Stomach (tissue), 19 donors: ENCODE measurements at regions of chr12 and their contacts with region 1.

Region 1: DNA sequence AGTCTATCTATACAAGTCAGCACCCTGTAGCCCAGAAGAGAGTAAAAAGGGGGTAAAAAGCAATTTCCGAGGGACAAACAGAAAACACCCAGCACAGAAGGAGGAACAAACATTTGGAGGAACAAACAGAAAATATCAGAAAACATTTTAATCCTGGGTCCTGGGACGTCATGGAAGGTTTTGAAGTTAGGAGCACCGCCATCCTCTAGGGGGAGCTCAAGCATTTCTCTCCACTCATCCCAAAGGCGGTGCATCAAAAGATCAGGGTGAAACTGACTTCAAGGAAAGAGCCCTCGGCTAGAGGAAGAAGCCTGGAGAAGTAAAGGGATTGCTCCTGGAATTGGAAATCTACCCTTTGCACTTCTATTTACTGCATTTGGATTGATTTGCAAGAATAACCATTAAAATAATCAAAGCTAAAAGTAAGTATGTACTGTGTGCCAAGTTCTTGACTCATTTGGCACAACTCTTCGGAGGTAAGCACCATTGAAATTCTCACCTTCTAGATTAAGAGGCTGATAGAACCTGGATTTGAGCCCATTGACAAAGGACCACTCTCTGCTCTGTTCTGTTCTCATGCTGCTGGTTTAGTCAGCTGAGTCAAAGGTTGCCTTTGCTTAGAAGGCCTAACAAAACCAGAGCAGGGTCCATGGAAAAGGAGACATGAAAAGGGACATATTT is 17.2 kb upstream of the POC1B start:
- DNase-seq: peak; percentile 76 to 94
- H3K4me3 ChIP-seq: no peak overlapping the region
- H3K27ac ChIP-seq: no peak overlapping the region
- H3K4me1 ChIP-seq: peaks cover 10 to 27% (median 14%) of the 10 kb centered on the region in 4 donors
- H3K27me3 ChIP-seq: no peaks in the 10 kb centered on the region
- CTCF ChIP-seq: peak in 5 of 7 experiments; percentile 70 to 82 (median 78)
- EP300 ChIP-seq: no peak
- POLR2A ChIP-seq: no peak

Region 2: GRCh38 chr12:88960213-88960878 is 582.7 kb before region 1 on chr12:
- intact Hi-C with region 1: no loop called
- DNase-seq: peak in 1 of 2 donors; percentile 22
- H3K4me3 ChIP-seq: no peak overlapping the region
- H3K27ac ChIP-seq: no peak overlapping the region
- H3K4me1 ChIP-seq: peaks cover 0 to 12% (median 2%) of the 10 kb centered on the region in 4 donors
- H3K27me3 ChIP-seq: no peaks in the 10 kb centered on the region
- CTCF ChIP-seq: no peak
- EP300 ChIP-seq: no peak
- POLR2A ChIP-seq: no peak

Region 3: DNA sequence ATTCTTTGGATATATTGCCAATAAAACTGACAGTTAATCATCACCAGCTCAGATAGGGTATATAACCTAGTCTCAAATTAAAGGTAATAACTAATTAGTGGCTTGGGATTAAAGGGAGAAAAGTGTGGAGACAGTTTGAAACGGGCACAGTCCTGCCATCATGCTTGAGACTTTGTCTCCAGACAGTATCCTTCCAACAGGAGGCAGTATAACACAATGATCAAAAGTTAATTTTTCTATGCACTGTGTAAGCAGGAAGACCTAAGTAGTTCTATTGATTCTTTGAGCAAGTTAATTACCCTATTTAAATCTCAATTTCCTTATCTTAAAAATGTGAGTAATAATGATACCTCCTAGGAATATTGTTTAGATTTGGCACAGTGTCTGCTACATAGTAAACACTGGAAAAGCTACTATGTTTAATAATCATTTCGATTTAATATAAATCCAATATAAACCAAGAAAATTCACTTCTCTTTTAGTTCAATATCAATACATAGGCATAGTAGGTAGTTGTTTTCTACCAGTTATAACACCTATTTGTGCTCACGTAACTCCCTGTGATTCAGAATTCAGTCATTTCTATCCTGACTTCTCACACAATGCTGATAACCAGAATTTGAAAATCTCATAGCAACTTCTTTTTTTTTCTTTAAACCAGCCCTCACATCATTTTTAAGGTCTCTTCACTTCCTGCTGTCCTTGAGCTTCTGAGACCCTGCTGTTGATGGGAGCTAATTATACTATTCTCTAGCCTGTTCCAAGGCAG is 72.1 kb before region 1 on chr12:
- intact Hi-C with region 1: no loop called
- DNase-seq: peak in 1 of 2 donors; percentile 82
- H3K4me3 ChIP-seq: no peak overlapping the region
- H3K27ac ChIP-seq: peak overlapping the region in 1 of 5 donors; percentile 42
- H3K4me1 ChIP-seq: peaks cover 0 to 11% (median 2%) of the 10 kb centered on the region in 4 donors
- H3K27me3 ChIP-seq: no peaks in the 10 kb centered on the region
- CTCF ChIP-seq: peak in 5 of 7 experiments; percentile 39 to 70 (median 55)
- EP300 ChIP-seq: no peak
- POLR2A ChIP-seq: no peak

Region 4: DNA sequence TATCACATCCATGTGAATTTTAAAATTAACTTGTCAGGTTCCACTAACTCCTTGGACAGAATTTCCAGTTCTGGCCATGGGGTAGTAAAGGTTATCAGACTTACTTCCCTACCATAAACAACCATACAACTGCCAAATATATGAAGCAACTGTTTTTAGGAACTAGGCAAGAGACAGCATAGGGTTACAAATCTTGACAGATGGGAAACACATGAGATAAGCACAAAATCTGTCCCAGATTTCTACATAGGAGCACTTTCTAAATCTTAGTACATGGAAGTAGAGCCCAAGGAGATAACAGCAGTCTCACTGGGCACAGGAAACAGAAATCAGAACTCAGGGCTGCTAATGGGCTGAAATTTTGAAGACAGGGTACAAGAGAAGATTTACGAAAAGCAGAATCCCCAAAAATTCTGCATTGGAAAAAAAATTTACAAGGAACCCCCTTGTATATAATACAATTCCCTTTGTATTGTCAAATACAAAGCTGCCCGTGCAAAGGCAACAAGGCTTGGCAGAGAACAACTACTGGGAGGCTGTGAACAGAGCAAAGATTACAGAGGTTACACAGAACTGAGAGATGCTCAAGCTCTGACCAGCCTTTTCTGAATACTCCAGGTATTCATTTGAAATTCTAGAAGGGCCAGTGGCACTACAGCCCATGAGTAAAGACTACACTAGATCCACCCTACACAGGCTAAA is 61.7 kb before region 1 on chr12:
- intact Hi-C with region 1: no loop called
- DNase-seq: no peak
- H3K4me3 ChIP-seq: no peak overlapping the region
- H3K27ac ChIP-seq: no peak overlapping the region
- H3K4me1 ChIP-seq: peaks cover 0 to 12% (median 3%) of the 10 kb centered on the region in 4 donors
- H3K27me3 ChIP-seq: no peaks in the 10 kb centered on the region
- CTCF ChIP-seq: no peak
- EP300 ChIP-seq: no peak
- POLR2A ChIP-seq: no peak

Region 5: GRCh38 chr12:89663577-89664357 is 120.7 kb after region 1 on chr12:
- intact Hi-C with region 1: no loop called
- DNase-seq: peak in 1 of 2 donors; percentile 13
- H3K4me3 ChIP-seq: no peak overlapping the region
- H3K27ac ChIP-seq: no peak overlapping the region
- H3K4me1 ChIP-seq: peaks cover 15 to 46% (median 28%) of the 10 kb centered on the region in 4 donors
- H3K27me3 ChIP-seq: no peaks in the 10 kb centered on the region
- CTCF ChIP-seq: no peak
- EP300 ChIP-seq: no peak
- POLR2A ChIP-seq: no peak

Region 6: DNA sequence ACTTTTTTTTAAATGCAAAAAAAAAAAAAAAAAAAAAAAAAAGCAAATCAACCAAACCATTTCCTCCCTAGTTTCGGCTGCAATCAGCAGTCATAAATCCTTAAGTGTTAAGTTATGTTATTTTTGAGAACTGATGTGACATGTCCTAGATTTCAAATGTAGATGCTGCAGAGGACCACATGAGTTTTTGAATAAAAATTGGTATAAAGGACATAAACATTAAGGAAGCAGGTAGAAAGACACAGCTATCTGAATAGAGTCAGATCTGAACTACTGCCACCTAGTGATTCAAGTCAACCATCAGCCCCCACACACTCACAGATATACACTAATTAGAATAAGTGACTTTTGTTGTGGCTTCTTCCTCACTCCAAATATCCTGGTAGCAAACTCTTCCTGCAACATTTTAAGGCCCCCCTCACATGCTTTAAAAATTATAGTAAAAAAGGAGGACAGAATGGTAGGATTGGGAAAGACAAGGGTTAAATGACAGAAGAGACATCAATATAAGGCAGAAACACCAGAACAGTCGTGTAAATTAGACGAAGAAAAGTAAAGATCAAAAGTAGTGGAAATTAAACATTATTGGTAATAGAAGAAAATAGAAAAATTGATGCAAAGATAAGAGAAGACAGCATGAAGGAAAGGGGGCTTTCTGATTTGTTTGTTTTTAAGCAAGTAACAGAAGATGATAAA is 560.1 kb after region 1 on chr12:
- intact Hi-C with region 1: loop called (anchors 10 kb)
- DNase-seq: peak in 1 of 2 donors; percentile 59
- H3K4me3 ChIP-seq: no peak overlapping the region
- H3K27ac ChIP-seq: no peak overlapping the region
- H3K4me1 ChIP-seq: no peaks in the 10 kb centered on the region
- H3K27me3 ChIP-seq: no peaks in the 10 kb centered on the region
- CTCF ChIP-seq: peak in 1 of 7 experiments; percentile 38
- EP300 ChIP-seq: no peak
- POLR2A ChIP-seq: no peak